IMR-90 (cell line): ENCODE measurements at regions of chrX and their contacts with region 1.

Region 1: DNA sequence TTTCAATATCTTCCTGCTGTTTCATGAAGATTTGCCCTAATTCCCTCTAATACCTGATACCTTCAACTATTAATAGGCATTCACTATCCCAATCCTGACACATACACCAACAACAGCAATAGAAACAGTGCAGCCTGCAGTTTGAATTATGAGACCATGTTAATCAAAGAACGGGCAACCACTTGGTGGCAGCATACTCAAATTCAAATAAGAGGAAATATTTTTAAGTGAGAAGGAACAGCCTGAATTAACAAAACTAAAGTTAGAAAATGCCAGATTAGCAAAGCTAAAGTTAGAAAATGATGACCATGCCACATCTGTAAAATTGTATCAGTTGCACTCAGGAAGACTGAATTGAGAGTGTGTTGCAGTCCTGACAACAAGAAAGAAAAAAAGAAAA is 204.9 kb downstream of the SMARCA1 start:
- DNase-seq: peak; percentile 35
- ATAC-seq: 0 out of 2 replicates have a peak, but pooled peaks have one; percentile 35
- H3K4me3 ChIP-seq: no peak overlapping the region
- H3K27ac ChIP-seq: no peak overlapping the region
- H3K4me1 ChIP-seq: no peaks in the 10 kb centered on the region
- H3K27me3 ChIP-seq: no peaks in the 10 kb centered on the region
- CTCF ChIP-seq: peak; percentile 47
- POLR2A ChIP-seq: no peak
- RAD21 ChIP-seq: peak; percentile 34; the same call in 1 of the 2 replicates

Region 2: GRCh38 chrX:129360175-129360574 is 41.8 kb after region 1 on chrX:
- CTCF ChIA-PET with region 1: no interaction called
- POLR2A ChIA-PET with region 1: no interaction called
- dilution Hi-C with region 1: no loop called
- in situ Hi-C with region 1: no loop called
- intact Hi-C with region 1: loop called (anchors 1 kb)
- DNase-seq: peak; percentile 40
- ATAC-seq: peak; percentile 74; the same call in 1 of the 2 replicates
- H3K4me3 ChIP-seq: no peak overlapping the region
- H3K27ac ChIP-seq: no peak overlapping the region
- H3K4me1 ChIP-seq: no peaks in the 10 kb centered on the region
- H3K27me3 ChIP-seq: no peaks in the 10 kb centered on the region
- CTCF ChIP-seq: peak; percentile 54
- POLR2A ChIP-seq: no peak
- RAD21 ChIP-seq: peak; percentile 58

Region 3: DNA sequence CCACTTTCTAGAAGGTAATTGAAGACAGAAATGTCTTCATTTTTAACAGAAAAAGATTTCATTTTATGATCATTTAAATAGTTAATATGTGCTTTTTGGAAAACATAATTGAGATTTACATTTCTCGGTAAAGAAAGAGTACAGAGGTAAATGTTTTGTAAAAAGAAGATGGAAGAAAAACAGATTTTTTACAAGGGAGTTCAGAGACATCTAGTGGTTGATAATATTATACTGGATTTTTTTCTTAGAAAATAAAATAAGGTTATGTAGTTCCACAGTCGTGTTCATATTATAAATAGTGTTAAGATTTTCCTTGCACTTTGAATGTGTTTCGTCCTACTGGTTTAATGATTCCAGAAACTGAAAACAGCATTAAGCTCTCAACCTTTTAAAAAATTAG is 144.3 kb after region 1 on chrX:
- CTCF ChIA-PET with region 1: no interaction called
- POLR2A ChIA-PET with region 1: no interaction called
- dilution Hi-C with region 1: no loop called
- in situ Hi-C with region 1: no loop called
- intact Hi-C with region 1: loop called (anchors 2 kb)
- DNase-seq: no peak
- ATAC-seq: no peak
- H3K4me3 ChIP-seq: no peak overlapping the region
- H3K27ac ChIP-seq: no peak overlapping the region
- H3K4me1 ChIP-seq: no peaks in the 10 kb centered on the region
- H3K27me3 ChIP-seq: no peaks in the 10 kb centered on the region
- CTCF ChIP-seq: no peak; the same call in 1 of the 2 replicates
- POLR2A ChIP-seq: no peak
- RAD21 ChIP-seq: no peak